ENCODE measurements at regions of chr9 and their contacts with region 1.

Region 1: GRCh38 chr9:69932901-69933300 is 110.7 kb upstream of the MAMDC2 start:
- DNase-seq: peak; percentile 54
- ATAC-seq: peak; percentile 48
- H3K4me3 ChIP-seq: no peak overlapping the region
- H3K27ac ChIP-seq: no peak overlapping the region
- H3K4me1 ChIP-seq: peaks cover 14% of the 10 kb centered on the region
- H3K27me3 ChIP-seq: no peaks in the 10 kb centered on the region
- CTCF ChIP-seq: peak; percentile 51

Region 2: GRCh38 chr9:69809304-69809863 is 123.5 kb before region 1 on chr9:
- CTCF ChIA-PET with region 1: interaction called, 4 read pairs
- POLR2A ChIA-PET with region 1: interaction called, 8 read pairs
- intact Hi-C with region 1: loop called (anchors 5 kb)
- DNase-seq: peak; percentile 37
- ATAC-seq: no peak
- H3K4me3 ChIP-seq: no peak overlapping the region
- H3K27ac ChIP-seq: no peak overlapping the region
- H3K4me1 ChIP-seq: no peaks in the 10 kb centered on the region
- H3K27me3 ChIP-seq: no peaks in the 10 kb centered on the region
- CTCF ChIP-seq: peak; percentile 59

Measured in PC-3 (cell line).